ENCODE measurements at regions of chr12 and their contacts with region 1.

Region 1: GRCh38 chr12:121793838-121794533 is 498 bp upstream of the RHOF start:
- DNase-seq: peak; percentile 94
- H3K4me3 ChIP-seq: peak overlapping the region; percentile 54 to 61
- H3K27ac ChIP-seq: peak overlapping the region; percentile 82 to 99
- H3K4me1 ChIP-seq: peaks cover 36 to 62% of the 10 kb centered on the region in 2 experiments
- H3K27me3 ChIP-seq: no peaks in the 10 kb centered on the region
- CTCF ChIP-seq: peak; percentile 97
- EP300 ChIP-seq: peak in 1 of 2 experiments; percentile 9; a peak in 1 of 4 replicates
- RAD21 ChIP-seq: peak; percentile 83

Region 2: GRCh38 chr12:121688966-121689365 is 105.0 kb before region 1 on chr12:
- CTCF ChIA-PET with region 1: interaction called, 92 read pairs
- POLR2A ChIA-PET with region 1: no interaction called
- DNase-seq: no peak
- H3K4me3 ChIP-seq: no peak overlapping the region
- H3K27ac ChIP-seq: no peak overlapping the region
- H3K4me1 ChIP-seq: no peaks in the 10 kb centered on the region
- H3K27me3 ChIP-seq: no peaks in the 10 kb centered on the region
- CTCF ChIP-seq: no peak
- EP300 ChIP-seq: no peak
- RAD21 ChIP-seq: no peak

Region 3: DNA sequence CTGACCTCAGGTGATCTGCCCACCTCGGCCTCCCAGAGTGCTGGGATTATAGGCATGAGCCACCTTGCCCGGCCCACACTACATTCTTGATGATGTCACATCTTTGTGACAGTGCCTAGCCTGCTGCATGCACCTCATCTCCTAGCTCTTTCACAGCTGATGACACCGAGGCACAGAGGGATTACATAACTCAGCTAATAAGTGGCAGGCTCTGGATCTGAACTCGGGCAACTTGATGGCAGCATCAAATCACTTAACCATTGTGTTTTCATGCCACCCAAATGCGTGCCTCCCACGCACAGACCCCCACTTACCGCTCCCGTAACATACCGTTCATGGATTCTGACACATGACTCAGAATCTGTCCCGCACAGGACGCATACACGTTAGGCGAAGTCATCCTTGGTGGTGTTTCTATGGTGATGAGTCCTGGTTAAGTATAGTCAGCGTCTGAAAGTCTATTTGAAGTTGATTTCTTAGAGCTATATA is 74.0 kb before region 1 on chr12:
- CTCF ChIA-PET with region 1: interaction called, 34 read pairs
- POLR2A ChIA-PET with region 1: no interaction called
- DNase-seq: no peak
- H3K4me3 ChIP-seq: no peak overlapping the region
- H3K27ac ChIP-seq: peak overlapping the region in 1 of 2 experiments; percentile 81; a peak in 2 of 4 replicates
- H3K4me1 ChIP-seq: peaks cover 0 to 9% of the 10 kb centered on the region in 2 experiments; a peak in 2 of 4 replicates
- H3K27me3 ChIP-seq: no peaks in the 10 kb centered on the region
- CTCF ChIP-seq: no peak
- EP300 ChIP-seq: no peak
- RAD21 ChIP-seq: no peak

Region 4: GRCh38 chr12:121823101-121823726 is 29.2 kb after region 1 on chr12:
- CTCF ChIA-PET with region 1: interaction called, 675 read pairs
- POLR2A ChIA-PET with region 1: no interaction called
- DNase-seq: peak; percentile 47
- H3K4me3 ChIP-seq: no peak overlapping the region
- H3K27ac ChIP-seq: no peak overlapping the region
- H3K4me1 ChIP-seq: peaks cover 0 to under 1% of the 10 kb centered on the region in 2 experiments; a peak in 1 of 4 replicates
- H3K27me3 ChIP-seq: no peaks in the 10 kb centered on the region
- CTCF ChIP-seq: no peak
- EP300 ChIP-seq: no peak
- RAD21 ChIP-seq: 0 out of 2 replicates have a peak, but pooled peaks have one; percentile 12

Region 5: DNA sequence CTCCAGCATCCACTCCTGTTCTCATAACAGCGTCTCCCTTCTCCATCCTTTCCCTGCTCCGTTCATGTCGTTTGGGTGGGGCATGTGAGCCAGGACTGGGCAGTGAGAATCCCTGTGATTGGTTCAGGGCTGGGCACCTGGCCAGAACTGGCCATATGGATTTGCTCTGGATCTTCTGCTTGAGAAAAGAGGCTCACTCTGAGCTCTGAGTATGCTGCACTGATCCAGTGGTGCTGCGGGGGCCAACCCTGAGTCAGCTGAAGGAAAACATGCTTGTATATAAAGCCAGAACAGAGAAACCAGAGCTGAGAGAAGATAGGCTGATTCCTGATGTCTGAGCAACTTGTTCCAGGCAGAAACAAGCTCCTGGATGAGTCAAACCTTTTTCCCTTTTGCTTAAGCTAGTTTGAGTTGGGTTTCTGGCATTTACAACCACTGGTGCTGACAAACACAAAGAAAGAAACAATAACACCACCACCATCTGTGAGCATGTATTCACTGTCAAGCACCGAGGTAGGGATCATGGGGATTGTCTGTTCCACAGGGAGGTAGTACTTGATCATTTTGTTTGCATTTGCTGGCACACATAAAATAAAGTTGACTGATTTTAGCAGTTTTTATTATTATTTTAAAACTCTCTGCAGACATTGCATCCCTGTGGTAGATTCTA is 78.7 kb after region 1 on chr12:
- CTCF ChIA-PET with region 1: interaction called, 47 read pairs
- POLR2A ChIA-PET with region 1: interaction called, 6 read pairs
- DNase-seq: peak; percentile 86
- H3K4me3 ChIP-seq: no peak overlapping the region; a peak in 1 of 4 replicates
- H3K27ac ChIP-seq: peak overlapping the region; percentile 85 to 90
- H3K4me1 ChIP-seq: peaks cover 10 to 13% of the 10 kb centered on the region in 2 experiments; a peak in 3 of 4 replicates
- H3K27me3 ChIP-seq: no peaks in the 10 kb centered on the region
- CTCF ChIP-seq: no peak
- EP300 ChIP-seq: peak; percentile 13 to 19; a peak in 2 of 4 replicates
- RAD21 ChIP-seq: no peak; the same call in 1 of the 2 replicates

Region 6: DNA sequence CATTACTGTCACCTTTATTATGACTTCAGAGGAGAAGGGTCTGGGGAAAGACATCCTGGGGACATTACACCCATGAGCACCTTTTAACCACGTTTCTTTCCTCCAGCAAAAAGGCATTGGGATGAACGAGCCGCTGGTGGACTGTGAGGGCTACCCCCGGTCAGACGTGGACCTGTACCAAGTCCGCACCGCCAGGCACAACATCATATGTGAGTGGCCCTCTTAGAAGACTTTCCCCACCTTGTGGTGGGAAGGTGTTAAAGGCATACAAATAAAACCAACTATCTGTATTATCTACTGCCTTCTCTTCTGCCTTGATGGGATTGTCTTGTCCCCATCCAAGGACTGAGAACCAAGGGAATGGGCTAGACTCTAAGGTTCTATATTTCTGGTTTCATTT is 100.6 kb after region 1 on chr12:
- CTCF ChIA-PET with region 1: interaction called, 186 read pairs
- POLR2A ChIA-PET with region 1: interaction called, 34 read pairs
- DNase-seq: peak; percentile 49
- H3K4me3 ChIP-seq: no peak overlapping the region
- H3K27ac ChIP-seq: peak overlapping the region in 1 of 2 experiments; percentile 64; a peak in 2 of 4 replicates
- H3K4me1 ChIP-seq: peaks cover 4 to 18% of the 10 kb centered on the region in 2 experiments; a peak in 2 of 4 replicates
- H3K27me3 ChIP-seq: no peaks in the 10 kb centered on the region
- CTCF ChIP-seq: peak; percentile 38; the same call in 1 of the 2 replicates
- EP300 ChIP-seq: no peak
- RAD21 ChIP-seq: peak; percentile 40